ENCODE measurements at regions of chr11 and their contacts with region 1.

Region 1: GRCh38 chr11:118689851-118690552 is 10.6 kb upstream of the TREH start:
- DNase-seq: peak; percentile 43
- H3K4me3 ChIP-seq: peak overlapping the region; percentile 51
- H3K27ac ChIP-seq: no peak overlapping the region
- H3K27me3 ChIP-seq: peaks cover 3% of the 10 kb centered on the region
- CTCF ChIP-seq: peak; percentile 76

Region 2: DNA sequence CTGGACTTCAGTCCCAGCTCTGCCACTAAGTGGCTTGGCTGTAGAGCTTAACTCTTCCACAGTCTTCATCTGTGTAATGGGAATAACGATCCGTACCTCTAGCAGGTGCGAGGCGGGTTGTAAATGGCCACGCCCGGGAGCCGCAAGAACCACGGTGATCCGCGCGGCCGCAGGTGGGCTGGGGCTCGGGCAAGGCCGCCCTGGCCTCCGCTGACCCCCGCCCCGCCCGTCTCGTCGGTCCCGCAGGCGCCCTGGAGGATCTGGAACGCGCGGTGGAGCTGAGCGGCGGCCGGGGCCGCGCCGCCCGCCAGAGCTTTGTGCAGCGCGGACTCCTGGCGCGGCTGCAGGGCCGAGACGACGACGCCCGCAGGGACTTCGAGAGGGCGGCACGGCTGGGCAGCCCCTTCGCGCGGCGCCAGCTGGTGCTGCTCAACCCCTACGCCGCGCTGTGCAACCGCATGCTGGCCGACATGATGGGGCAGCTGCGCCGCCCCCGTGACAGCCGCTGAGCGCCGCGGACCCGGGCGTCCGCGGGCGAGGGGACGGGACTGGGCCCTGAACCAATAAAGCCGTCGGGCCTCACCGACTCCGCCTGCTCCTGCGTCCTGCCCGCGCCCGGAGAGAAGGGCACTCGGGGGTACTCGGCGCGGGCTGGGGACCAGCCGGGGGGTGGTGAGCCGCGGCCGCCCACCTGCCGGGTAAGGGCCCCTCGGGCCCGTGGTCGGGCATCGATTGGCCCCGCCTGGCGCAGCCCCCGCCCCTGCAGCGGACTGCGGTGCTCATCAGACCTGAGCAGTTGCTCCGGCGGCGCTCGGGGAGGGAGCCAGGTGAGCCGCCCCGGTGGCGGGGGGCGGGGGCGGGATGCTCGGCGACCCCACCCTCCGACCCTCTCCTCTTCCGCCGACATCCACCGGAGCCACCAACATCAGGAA is 159.3 kb before region 1 on chr11 and contains the start of gene TMEM25:
- CTCF ChIA-PET with region 1: no interaction called
- POLR2A ChIA-PET with region 1: no interaction called
- DNase-seq: no peak
- H3K4me3 ChIP-seq: peak within 1 kb of the TSS; percentile 82
- H3K27ac ChIP-seq: no peak within 1 kb of the TSS
- H3K27me3 ChIP-seq: no peaks in the 10 kb centered on the region
- CTCF ChIP-seq: no peak
- polyA plus RNA-seq, gene TMEM25: 22.5 and 26.1 TPM in 2 replicates

Region 3: DNA sequence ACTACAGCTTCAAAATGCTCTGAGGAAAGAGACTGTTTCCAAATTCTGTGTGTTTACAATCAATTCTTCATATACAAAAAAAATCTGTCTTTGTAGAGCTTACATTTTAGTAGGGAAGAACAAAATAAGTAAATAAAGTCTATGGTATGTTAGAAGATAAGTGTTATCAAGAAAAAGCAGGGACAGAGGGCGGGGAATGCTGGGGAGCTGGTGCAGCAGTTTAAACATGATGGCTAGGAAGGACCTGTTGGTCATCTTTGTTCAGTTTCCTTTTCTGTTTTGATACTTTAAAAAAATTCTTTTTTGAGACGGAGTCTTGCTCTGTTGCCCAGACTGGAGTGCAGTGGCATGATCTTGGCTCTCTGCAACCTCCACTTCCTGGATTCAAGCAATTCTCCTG is 142.9 kb before region 1 on chr11:
- CTCF ChIA-PET with region 1: no interaction called
- POLR2A ChIA-PET with region 1: no interaction called
- DNase-seq: no peak
- H3K4me3 ChIP-seq: no peak overlapping the region
- H3K27ac ChIP-seq: no peak overlapping the region
- H3K27me3 ChIP-seq: no peaks in the 10 kb centered on the region
- CTCF ChIP-seq: no peak

Region 4: DNA sequence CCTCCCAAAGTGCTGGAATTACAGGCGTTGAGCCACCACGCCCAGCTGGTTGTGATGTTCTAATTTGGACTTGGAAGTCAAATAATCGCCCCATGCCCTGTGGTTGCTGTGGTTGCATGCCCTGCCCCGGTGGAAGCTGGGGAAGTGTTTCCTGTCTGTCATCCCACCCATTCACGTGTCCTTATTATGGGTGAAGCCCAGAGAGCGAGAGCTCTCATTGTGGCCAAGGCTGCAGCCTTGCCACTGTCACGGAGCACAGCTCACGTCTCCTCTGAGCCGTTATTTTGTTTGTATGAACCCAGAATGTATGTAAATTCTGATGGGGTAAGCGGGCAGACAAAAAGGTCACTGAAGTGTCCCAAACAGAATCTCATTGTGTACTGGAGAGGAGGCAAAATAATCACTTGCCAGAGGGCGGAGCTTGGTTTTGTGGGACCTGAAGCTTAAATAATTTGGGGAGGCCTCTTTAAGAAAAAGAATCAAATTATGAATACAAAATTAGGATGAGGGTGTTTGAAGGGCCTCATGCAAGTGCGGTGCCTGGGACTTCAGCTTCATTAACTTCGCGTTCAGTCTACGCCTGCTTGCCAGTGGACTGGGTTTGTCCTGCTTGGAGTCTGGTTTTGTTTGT is 15.2 kb after region 1 on chr11:
- CTCF ChIA-PET with region 1: interaction called, 18 read pairs
- POLR2A ChIA-PET with region 1: no interaction called
- DNase-seq: no peak
- H3K4me3 ChIP-seq: no peak overlapping the region
- H3K27ac ChIP-seq: no peak overlapping the region
- H3K27me3 ChIP-seq: peaks cover 15% of the 10 kb centered on the region
- CTCF ChIP-seq: no peak

Region 5: DNA sequence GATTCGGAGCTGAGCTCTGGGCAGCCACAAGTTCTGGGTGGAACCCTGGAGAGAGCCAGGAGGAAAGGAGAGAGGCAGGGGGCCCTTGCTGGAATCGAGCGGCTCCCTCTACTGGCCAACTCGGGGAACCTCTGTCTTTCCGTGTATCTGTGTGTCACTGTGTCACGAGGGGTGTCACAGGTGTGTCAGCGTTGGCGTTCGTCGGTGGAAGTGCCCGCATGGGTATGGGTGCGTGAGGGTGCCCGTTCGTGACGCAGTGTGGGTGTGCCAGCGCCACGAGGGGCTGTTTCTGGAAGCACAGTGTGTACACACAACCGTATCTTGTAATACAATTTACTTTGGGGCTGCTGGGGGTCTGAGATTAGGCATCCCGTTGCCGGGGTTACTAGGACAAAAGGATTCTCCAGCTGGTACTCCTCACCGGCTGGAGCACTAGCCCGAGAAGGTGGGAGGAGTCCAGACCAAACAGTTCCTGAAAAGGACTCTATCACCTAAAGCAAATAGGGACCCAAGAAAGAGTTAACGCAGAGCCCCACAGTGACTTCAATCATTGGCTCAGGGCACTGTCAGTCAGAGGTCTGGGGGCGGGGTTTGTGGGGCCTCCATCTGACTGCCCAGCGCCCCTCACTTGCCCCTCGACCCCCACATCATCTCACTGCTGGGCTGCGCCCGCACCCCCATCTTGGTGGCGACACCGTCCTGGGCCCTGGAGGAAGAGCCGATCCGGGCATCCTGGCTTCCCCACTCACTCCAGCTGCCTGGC is 238.3 kb after region 1 on chr11:
- CTCF ChIA-PET with region 1: interaction called, 63 read pairs
- POLR2A ChIA-PET with region 1: no interaction called
- DNase-seq: peak; percentile 78
- H3K4me3 ChIP-seq: peak overlapping the region; percentile 74
- H3K27ac ChIP-seq: peak overlapping the region; percentile 57
- H3K27me3 ChIP-seq: no peaks in the 10 kb centered on the region
- CTCF ChIP-seq: peak; percentile 95

Region 6: DNA sequence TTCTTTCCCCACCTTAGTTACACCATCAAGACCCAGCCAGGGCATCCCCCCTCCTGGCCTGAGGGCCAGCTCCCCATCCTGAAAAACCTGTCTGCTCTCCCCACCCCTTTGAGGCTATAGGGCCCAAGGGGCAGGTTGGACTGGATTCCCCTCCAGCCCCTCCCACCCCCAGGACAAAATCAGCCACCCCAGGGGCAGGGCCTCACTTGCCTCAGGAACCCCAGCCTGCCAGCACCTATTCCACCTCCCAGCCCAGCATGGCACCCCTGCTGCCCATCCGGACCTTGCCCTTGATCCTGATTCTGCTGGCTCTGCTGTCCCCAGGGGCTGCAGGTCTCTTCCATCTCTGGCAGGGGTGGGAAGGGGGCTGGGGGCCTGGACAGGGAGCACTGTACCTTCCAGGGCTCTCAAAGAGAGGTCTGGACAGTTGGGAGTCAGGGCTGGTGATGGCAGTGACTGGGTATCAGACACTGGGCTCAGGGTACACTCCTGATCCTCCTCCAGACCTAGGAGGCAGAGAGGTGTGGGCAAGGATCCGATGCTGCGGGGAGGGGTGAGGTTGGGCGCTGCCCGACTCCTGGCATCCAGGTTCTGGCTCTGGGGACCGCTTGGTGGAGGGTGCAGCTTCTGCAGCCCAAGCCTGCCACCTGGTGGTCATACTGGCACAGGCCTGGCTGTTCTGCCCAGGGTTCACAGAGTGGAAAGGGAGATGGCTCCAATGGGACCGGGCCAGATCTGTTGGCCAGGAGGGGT is 266.3 kb after region 1 on chr11 and contains the start of gene UPK2:
- CTCF ChIA-PET with region 1: interaction called, 57 read pairs
- POLR2A ChIA-PET with region 1: no interaction called
- DNase-seq: peak; percentile 53
- H3K4me3 ChIP-seq: no peak within 1 kb of the TSS
- H3K27ac ChIP-seq: no peak within 1 kb of the TSS
- H3K27me3 ChIP-seq: peaks cover 39% of the 10 kb centered on the region
- CTCF ChIP-seq: peak; percentile 93
- polyA plus RNA-seq, gene UPK2: 0.20 TPM in 1 of 2 replicates, not detected in the other